Right lobe of liver (tissue), 6 donors: ENCODE measurements at regions of chr10 and their contacts with region 1.

Region 1: DNA sequence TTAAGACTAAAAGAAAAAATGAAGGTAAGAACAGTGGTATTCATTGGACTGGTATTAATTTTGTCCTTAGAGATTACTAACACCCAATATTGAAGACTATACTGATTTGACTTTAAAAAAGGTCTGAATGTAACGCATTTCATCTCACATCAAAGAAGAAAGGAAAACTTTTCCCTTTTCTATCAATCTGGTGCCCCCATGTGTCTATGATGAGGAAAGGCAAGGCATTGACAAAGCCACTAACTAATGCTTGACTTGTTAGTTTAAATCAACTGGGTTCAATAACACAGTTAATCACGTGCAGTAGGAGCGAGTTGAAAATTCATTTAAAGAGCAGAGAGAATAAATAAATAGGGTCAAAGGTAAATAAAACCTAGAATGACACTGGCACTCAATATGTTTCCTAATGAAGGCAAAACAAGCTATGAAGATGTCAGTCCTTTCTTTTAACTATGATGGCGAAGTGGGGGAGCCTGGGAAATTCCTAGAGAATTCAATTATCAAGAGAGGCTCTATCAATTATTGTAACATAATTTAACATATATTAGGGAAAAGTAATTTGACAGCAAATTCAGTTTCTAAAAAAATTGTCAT is 180.9 kb downstream of the ANK3 start:
- DNase-seq: no peak
- ATAC-seq: peak; percentile 73 to 81 (median 78)
- H3K4me3 ChIP-seq: no peak overlapping the region
- H3K27ac ChIP-seq: no peak overlapping the region
- H3K4me1 ChIP-seq: no peaks in the 10 kb centered on the region
- H3K27me3 ChIP-seq: no peaks in the 10 kb centered on the region
- CTCF ChIP-seq: peak; percentile 69 to 76 (median 74)
- POLR2A ChIP-seq: no peak

Region 2: DNA sequence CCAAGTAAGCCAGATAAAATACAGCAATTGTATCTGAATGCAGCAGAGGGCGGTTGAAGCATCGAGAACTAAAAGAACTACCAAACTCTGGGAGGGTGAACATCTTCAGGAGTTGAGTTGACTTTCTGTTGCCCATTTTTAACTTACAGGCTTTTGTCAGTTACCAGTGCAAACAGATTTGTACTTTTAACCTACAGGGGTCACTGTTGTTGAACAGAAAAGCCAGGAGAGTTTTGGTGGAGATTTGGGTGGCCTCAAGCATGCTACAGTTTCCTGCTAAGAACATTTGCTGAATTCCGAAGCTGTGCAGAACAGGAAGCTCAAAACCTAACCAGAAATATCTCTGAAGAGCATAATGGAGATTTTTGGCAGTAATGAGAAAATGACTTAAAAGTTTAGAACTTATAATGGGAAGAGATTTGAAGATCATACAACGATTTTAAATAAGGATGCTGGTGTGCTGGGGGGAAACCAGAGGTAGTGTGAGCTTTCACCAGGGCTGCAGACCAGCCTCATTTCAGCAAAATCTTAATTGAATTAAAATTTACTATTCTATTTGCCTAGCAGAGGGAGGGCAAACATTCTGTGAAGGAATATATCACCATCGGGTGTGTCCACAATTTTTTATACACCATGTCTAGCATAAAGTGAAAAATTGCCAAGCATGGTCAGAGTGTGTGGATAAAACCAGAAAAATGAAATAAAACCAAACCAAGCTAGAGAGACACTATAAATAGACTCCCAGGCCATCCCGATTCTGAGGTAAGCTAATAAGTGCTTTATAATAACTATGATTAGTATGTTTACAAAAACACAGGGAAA is 93.8 kb before region 1 on chr10:
- intact Hi-C with region 1: loop called in 1 of 2 experiments (anchors 5 kb)
- DNase-seq: no peak
- ATAC-seq: peak; percentile 67 to 84 (median 71)
- H3K4me3 ChIP-seq: no peak overlapping the region
- H3K27ac ChIP-seq: no peak overlapping the region
- H3K4me1 ChIP-seq: no peaks in the 10 kb centered on the region
- H3K27me3 ChIP-seq: no peaks in the 10 kb centered on the region
- CTCF ChIP-seq: peak; percentile 50 to 71 (median 61)
- POLR2A ChIP-seq: no peak

Region 3: GRCh38 chr10:60257767-60258428 is 49.1 kb after region 1 on chr10:
- intact Hi-C with region 1: no loop called
- DNase-seq: no peak
- ATAC-seq: peak in 3 of 4 donors; percentile 28 to 67 (median 57)
- H3K4me3 ChIP-seq: no peak overlapping the region
- H3K27ac ChIP-seq: no peak overlapping the region
- H3K4me1 ChIP-seq: no peaks in the 10 kb centered on the region
- H3K27me3 ChIP-seq: no peaks in the 10 kb centered on the region
- CTCF ChIP-seq: no peak
- POLR2A ChIP-seq: no peak

Region 4: DNA sequence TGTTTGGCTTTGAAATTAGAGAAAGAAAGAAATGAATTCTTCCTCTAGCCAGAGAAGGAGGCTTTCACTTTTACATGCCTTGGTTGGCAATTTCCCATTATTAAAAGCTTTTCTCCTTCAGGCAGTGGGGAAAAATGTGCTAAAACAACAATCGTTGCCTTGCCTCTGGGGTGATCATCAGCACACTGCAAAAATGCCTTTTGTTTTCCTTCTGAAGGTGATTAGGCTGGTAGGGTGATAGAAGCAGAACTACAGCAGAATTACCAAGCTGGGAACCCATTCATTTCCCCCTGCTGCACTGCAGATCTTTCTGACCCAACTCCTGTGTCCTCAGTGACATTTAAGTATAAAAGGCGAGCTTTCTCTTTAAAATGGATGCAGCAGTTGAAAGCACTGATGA is 158.7 kb after region 1 on chr10:
- intact Hi-C with region 1: no loop called
- DNase-seq: no peak
- ATAC-seq: no peak
- H3K4me3 ChIP-seq: no peak overlapping the region
- H3K27ac ChIP-seq: no peak overlapping the region
- H3K4me1 ChIP-seq: peaks cover 0 to 5% (median 0%) of the 10 kb centered on the region in 4 donors
- H3K27me3 ChIP-seq: no peaks in the 10 kb centered on the region
- CTCF ChIP-seq: no peak
- POLR2A ChIP-seq: no peak